ENCODE measurements at regions of chr11 and their contacts with region 1.

Region 1: DNA sequence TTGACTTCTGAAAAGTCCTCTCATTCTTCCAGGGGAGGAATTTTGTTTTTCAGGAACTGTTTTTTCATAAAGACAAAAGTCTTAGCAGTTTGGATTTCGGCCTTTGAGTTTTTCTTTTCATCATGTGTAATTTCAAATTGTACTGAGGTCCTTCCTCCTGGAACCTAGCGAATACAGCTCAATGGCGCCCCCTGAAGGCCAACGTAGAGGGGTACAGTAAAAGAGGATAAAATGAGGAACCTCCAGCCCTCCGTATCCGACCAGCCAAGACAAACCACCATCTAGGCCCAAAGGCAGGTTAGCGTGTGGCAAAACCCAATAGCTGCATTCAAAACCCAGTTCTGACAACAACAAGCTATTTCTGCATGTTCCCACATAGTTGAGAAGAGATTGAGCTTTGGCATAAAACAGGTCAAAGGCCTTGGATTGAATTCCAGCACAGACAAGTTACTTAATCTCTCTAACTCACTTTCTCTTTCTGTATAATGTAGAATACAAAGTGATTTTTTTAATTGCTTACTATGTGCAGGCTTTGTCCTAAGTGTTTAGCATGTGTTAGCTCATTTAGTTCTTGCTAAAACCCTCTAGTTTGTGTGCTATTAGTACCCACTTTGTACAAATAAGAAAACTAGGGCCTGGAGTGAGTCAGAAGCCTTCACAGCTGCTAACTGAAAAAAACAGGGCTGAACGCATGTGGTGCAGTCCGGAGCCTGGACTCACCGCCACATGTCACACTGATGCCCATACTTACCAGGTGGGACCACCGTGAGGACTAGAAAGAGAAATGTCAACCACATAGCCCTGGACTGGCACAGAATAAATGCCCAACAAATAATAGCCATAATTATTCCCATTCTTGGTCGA is 43.2 kb upstream of the ETS1 start:
- DNase-seq: peak; percentile 86
- ATAC-seq: peak; percentile 85
- H3K4me3 Mint-ChIP-seq: peak overlapping the region; percentile 50
- H3K27ac Mint-ChIP-seq: peak overlapping the region; percentile 92
- H3K4me1 Mint-ChIP-seq: peaks cover 68% of the 10 kb centered on the region
- H3K27me3 Mint-ChIP-seq: no peaks in the 10 kb centered on the region
- CTCF ChIP-seq: no peak

Region 2: DNA sequence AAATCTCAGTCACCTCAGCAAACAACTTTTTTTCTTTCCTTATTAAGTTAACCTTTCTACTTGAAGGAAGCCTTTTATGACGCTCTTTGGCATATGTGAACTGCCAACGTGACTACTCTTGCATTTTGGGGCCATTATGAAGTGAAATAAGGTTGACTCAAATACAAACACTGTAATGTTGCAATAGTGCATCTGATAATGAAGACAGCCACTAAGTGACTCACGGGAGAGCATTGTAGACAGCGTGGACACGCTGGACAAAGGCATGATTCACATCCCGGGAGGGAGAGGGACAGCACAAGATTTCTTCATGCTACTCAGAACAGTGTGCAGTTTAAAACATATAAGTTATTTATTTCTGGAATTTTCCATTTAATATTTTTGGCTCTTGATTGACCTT is 604.0 kb before region 1 on chr11:
- CTCF ChIA-PET with region 1: no interaction called
- POLR2A ChIA-PET with region 1: no interaction called
- intact Hi-C with region 1: loop called (anchors 2 kb)
- DNase-seq: no peak
- ATAC-seq: no peak
- H3K4me3 Mint-ChIP-seq: no peak overlapping the region
- H3K27ac Mint-ChIP-seq: no peak overlapping the region
- H3K4me1 Mint-ChIP-seq: no peaks in the 10 kb centered on the region
- H3K27me3 Mint-ChIP-seq: peaks cover 32% of the 10 kb centered on the region
- CTCF ChIP-seq: no peak

Region 3: GRCh38 chr11:128302425-128303186 is 328.0 kb before region 1 on chr11:
- CTCF ChIA-PET with region 1: interaction called, 14 read pairs
- POLR2A ChIA-PET with region 1: no interaction called
- intact Hi-C with region 1: no loop called
- DNase-seq: no peak
- ATAC-seq: peak; percentile 89
- H3K4me3 Mint-ChIP-seq: peak overlapping the region; percentile 21
- H3K27ac Mint-ChIP-seq: peak overlapping the region; percentile 81
- H3K4me1 Mint-ChIP-seq: peaks cover 73% of the 10 kb centered on the region
- H3K27me3 Mint-ChIP-seq: no peaks in the 10 kb centered on the region
- CTCF ChIP-seq: no peak

Region 4: GRCh38 chr11:128506999-128507611 is 123.5 kb before region 1 on chr11:
- CTCF ChIA-PET with region 1: interaction called, 10 read pairs
- POLR2A ChIA-PET with region 1: interaction called, 12 read pairs
- intact Hi-C with region 1: no loop called
- DNase-seq: no peak
- ATAC-seq: peak; percentile 64
- H3K4me3 Mint-ChIP-seq: peak overlapping the region; percentile 74
- H3K27ac Mint-ChIP-seq: peak overlapping the region; percentile 77
- H3K4me1 Mint-ChIP-seq: peaks cover 100% of the 10 kb centered on the region
- H3K27me3 Mint-ChIP-seq: no peaks in the 10 kb centered on the region
- CTCF ChIP-seq: no peak

Region 5: GRCh38 chr11:128603752-128604414 is 26.7 kb before region 1 on chr11:
- CTCF ChIA-PET with region 1: interaction called, 284 read pairs
- POLR2A ChIA-PET with region 1: interaction called, 574 read pairs
- intact Hi-C with region 1: loop called (anchors 1 kb)
- DNase-seq: no peak
- ATAC-seq: peak; percentile 63
- H3K4me3 Mint-ChIP-seq: no peak overlapping the region
- H3K27ac Mint-ChIP-seq: peak overlapping the region; percentile 78
- H3K4me1 Mint-ChIP-seq: peaks cover 70% of the 10 kb centered on the region
- H3K27me3 Mint-ChIP-seq: no peaks in the 10 kb centered on the region
- CTCF ChIP-seq: no peak

Region 6: DNA sequence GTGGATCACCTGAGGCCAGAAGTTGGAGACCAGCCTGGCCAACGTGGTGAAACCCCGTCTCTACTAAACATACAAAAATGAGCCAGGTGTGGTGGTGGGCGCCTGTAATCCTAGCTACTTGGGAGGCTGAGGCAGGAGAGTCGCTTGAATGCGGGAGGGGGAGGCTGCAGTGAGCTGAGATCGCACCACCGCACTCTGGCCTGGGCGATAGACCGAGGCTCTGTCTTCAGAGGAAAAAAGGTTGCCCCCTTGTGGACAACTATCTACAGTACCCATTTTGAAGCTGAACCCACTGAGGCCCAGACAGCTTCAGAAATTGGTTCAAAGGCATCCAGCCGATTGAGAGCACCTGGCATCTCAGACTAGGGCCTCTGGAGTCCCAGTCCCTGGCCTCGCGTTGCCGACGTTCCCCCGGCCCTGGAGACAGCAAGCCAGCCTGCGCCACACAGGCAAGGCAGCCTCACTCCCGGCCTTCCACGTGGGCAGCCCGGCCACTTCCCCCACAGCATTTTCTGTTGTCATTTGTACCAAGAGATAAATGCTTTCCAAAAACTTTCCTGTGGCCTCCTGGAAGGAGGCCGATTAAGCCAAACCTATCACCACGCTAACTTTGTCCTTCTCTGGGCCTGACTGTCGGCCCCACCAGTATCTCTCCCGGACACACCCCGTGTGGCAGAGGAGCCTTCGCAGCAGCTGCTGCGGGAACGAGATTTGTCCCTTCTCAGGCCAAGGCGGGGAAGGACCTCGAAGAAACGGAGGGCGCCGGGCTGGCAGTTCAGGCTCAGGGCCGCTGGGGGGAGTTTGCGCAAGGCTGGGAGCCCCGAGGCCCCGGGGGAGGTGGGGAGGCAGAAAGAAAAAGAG is 146.1 kb after region 1 on chr11:
- CTCF ChIA-PET with region 1: interaction called, 13 read pairs
- POLR2A ChIA-PET with region 1: interaction called, 5 read pairs
- intact Hi-C with region 1: no loop called
- DNase-seq: no peak
- ATAC-seq: no peak
- H3K4me3 Mint-ChIP-seq: no peak overlapping the region
- H3K27ac Mint-ChIP-seq: peak overlapping the region; percentile 56
- H3K4me1 Mint-ChIP-seq: peaks cover 42% of the 10 kb centered on the region
- H3K27me3 Mint-ChIP-seq: no peaks in the 10 kb centered on the region
- CTCF ChIP-seq: no peak

Measured in activated B cell treated with CpG ODN at 0.5 μM for 24 hours (primary cell).